RWPE1 (cell line): ENCODE measurements at regions of chr3 and their contacts with region 1.

Region 1: DNA sequence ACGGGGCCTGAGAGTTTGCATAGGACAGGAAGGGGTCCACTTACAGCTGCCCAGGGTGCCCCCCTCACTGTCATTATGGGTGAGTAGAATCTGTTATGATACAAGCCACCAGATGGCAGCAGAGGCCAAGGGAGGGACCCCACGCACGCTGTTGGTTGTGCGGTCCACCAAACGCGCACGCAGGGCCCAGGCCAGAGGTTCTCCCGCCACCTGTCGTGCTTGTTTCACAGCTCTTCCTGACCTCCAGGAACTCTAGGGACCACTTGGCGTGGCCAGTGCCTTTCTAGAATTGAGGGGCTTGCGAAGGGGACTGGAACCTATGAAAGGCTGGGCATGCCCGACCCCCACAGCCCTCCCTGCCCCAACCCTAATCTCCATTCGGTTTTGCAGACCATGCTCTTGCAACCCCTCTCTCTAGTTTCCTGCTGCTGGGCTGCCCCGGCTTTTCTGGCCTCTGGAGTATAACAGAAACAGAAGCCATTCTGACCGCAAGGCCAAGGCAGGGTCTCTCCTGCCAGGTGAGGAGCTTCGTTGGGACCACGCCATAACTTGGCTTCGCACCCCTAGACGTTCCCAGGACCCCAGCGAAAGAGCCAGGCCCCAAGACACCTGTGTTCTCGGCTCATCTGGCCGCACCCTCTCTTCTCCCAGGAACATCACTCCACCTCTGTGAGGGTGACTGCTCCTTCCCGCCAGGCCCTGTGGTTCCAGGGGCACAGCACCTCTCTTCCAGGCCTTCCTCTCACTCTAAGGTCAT is 46.0 kb downstream of the ALDH1L1 start:
- DNase-seq: peak; percentile 51
- H3K27ac ChIP-seq: no peak overlapping the region
- CTCF ChIP-seq: peak; percentile 80

Region 2: GRCh38 chr3:126116526-126116925 is 17.9 kb before region 1 on chr3:
- CTCF ChIA-PET with region 1: interaction called, 10 read pairs
- POLR2A ChIA-PET with region 1: no interaction called
- DNase-seq: no peak
- H3K27ac ChIP-seq: no peak overlapping the region
- CTCF ChIP-seq: no peak

Region 3: GRCh38 chr3:126287536-126288241 is 153.3 kb after region 1 on chr3:
- CTCF ChIA-PET with region 1: no interaction called
- POLR2A ChIA-PET with region 1: no interaction called
- DNase-seq: no peak
- H3K27ac ChIP-seq: peak overlapping the region; percentile 72
- CTCF ChIP-seq: no peak

Region 4: DNA sequence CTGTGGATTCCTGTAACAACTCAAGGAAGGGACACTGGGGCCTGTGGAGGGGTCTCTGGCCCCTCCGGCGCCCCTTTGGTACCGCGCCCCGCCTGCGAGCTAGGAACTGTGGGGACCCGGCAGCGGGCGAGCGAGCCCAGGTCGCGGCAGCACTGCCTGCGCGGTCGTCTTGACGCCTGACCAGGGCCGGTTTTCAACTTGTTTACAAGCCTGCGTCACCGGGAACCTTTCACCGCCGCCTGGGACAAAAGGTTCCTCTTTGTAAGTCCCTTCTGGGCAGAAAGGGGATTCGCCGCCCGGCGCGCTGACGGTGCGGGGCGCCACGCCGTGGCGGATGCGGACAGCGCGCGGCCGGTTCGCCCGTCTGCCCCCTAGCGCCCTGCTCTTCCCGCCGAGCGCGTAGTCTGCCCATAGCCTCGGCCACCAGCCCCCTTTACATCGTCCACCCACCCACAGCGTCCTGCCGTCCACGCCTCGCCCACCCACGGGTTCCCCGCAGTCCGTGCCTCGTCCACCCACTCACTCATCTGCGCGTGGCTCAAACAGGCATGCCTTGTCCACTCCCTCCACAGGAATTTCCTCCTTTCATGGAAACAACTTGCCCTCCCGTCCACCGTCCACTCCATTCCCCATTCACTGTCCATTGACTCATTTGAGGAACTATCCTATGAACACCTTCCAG is 254.9 kb after region 1 on chr3:
- CTCF ChIA-PET with region 1: interaction called, 23 read pairs
- POLR2A ChIA-PET with region 1: interaction called, 5 read pairs
- DNase-seq: peak; percentile 60
- H3K27ac ChIP-seq: no peak overlapping the region
- CTCF ChIP-seq: peak; percentile 95